Activated CD4-positive, alpha-beta T cell treated with anti-CD3 and anti-CD28 coated beads for 36 hours (primary cell): ENCODE measurements at regions of chr10 and their contacts with region 1.

Region 1: GRCh38 chr10:77104459-77104980 is 533.1 kb downstream of the KCNMA1 start:
- DNase-seq: no peak
- ATAC-seq: no peak
- H3K4me3 Mint-ChIP-seq: no peak overlapping the region
- H3K27ac Mint-ChIP-seq: no peak overlapping the region
- H3K4me1 Mint-ChIP-seq: no peaks in the 10 kb centered on the region
- H3K27me3 Mint-ChIP-seq: peaks cover 4% of the 10 kb centered on the region

Region 2: DNA sequence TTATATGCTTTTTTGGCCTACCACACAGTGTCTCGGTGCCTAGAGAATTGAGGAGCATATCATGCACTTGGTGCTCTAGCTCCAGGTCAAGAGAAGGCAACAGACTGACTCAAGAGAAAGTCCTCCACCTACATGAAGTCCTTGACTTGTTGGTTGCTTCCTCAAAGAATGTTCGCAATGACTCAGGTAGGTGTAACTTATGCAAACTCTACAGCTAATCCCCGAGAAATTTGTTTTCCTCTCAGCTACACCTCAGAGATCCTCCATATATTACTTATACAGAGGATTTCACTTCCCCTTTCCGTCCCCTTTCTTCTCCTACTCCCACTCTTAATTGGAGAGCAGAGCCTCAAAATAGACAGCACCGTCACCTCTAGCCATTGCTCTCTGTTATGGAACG is 480.1 kb before region 1 on chr10:
- CTCF ChIA-PET with region 1: no interaction called
- POLR2A ChIA-PET with region 1: no interaction called
- intact Hi-C with region 1: loop called in 1 of 2 experiments (anchors 10 kb)
- DNase-seq: no peak
- ATAC-seq: no peak
- H3K4me3 Mint-ChIP-seq: no peak overlapping the region
- H3K27ac Mint-ChIP-seq: no peak overlapping the region
- H3K4me1 Mint-ChIP-seq: no peaks in the 10 kb centered on the region
- H3K27me3 Mint-ChIP-seq: no peaks in the 10 kb centered on the region